ENCODE measurements at regions of chr2 and their contacts with region 1.

Region 1: DNA sequence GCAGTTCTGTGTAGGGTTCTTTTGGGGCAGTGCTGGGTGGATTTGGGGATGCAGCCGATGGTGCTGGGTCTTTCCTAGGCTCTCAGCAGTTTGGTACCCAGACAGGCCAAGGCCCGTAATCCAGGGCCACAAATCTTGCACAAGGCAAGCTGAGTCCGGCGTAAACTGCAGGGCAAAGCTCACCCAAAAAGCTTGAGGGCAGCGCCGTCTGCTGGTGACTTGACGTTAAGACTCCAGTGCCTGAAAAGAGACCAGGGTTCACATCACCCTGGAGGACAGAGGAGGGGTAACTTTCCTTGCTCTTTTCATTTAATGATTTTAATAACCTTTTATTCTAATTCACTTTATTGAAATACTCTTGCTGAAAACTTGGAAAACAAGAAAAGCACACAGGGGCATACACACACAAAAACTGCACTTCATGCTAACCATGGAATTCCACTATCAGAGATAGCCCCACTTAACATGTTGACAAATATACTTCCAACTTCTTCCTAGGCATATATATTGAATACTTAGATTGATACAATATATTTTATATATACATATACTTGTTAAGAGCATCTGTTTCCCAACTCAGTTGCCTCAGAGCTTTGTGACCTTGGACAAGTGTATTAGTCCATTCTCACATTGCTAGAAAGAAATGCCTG is 38.9 kb downstream of the CNGA3 start:
- DNase-seq: peak; percentile 83
- H3K4me3 Mint-ChIP-seq: no peak overlapping the region
- H3K27ac Mint-ChIP-seq: no peak overlapping the region
- H3K4me1 Mint-ChIP-seq: peaks cover 3% of the 10 kb centered on the region
- H3K27me3 Mint-ChIP-seq: peaks cover 7% of the 10 kb centered on the region

Region 2: DNA sequence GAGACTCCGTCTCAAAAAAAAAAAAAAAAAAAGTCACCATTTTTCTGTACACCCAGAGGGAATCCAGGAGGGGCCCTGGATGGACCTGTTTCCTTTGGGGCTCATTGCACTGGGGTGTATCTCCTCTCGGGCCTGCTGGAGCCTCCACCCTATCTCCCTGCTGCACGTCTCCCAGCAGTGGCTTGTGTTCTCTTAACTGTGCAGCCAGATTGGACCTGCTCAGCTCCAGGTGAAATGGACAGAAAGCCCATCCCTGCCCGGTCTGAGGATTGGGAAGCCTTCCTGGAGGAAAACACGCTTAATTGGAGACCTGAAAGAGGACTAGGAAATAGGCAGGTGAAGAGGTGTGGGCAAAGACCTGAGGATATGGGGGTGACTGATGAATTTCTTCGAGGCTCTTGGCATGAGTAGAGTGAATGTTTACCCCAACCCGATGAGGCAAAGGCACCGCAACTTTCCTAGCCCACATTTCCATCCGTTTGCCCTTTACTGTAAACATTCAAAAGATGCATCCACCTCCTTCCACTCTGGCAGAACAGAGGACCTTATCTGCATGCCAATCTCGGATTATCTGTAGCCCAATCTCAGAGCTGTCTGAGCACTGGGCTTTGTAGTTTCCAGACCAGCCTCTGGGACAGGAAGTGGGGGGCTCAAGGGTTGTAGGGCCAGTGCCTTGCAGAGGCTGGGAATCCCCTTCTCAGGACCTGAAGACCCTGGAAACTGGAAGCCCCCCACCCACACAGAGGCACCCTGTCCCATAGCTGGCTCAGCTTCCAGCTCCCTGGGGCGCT is 674.4 kb before region 1 on chr2:
- CTCF ChIA-PET with region 1: interaction called, 10 read pairs
- POLR2A ChIA-PET with region 1: no interaction called
- intact Hi-C with region 1: no loop called
- DNase-seq: peak; percentile 43
- H3K4me3 Mint-ChIP-seq: no peak overlapping the region
- H3K27ac Mint-ChIP-seq: peak overlapping the region; percentile 58
- H3K4me1 Mint-ChIP-seq: peaks cover 42% of the 10 kb centered on the region
- H3K27me3 Mint-ChIP-seq: no peaks in the 10 kb centered on the region

Region 3: DNA sequence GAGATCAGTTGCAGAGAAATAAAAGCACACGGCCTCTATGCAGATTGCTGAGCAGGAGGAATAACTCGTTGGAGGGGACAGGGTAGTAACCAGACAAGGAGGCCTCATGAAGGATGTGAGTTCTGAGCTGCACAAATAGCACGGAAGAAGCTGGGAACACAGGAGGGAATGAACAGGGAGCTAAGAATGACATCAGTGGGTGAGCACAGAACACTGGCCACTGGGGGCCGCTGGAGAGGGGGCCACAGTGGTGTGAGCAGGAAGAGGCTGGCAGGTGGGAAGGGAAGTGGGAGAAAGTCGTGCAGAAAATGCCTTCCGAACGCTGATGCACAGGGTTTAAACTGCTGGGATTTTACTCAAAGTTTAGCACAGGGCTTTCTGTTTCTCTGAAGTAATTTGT is 610.8 kb before region 1 on chr2:
- CTCF ChIA-PET with region 1: interaction called, 11 read pairs
- POLR2A ChIA-PET with region 1: no interaction called
- intact Hi-C with region 1: no loop called
- DNase-seq: no peak
- H3K4me3 Mint-ChIP-seq: no peak overlapping the region
- H3K27ac Mint-ChIP-seq: no peak overlapping the region
- H3K4me1 Mint-ChIP-seq: no peaks in the 10 kb centered on the region
- H3K27me3 Mint-ChIP-seq: no peaks in the 10 kb centered on the region

Region 4: GRCh38 chr2:97806738-97807618 is 578.2 kb before region 1 on chr2:
- CTCF ChIA-PET with region 1: interaction called, 36 read pairs
- POLR2A ChIA-PET with region 1: no interaction called
- intact Hi-C with region 1: loop called (anchors 1 kb)
- DNase-seq: peak; percentile 86
- H3K4me3 Mint-ChIP-seq: no peak overlapping the region
- H3K27ac Mint-ChIP-seq: no peak overlapping the region
- H3K4me1 Mint-ChIP-seq: no peaks in the 10 kb centered on the region
- H3K27me3 Mint-ChIP-seq: no peaks in the 10 kb centered on the region

Region 5: DNA sequence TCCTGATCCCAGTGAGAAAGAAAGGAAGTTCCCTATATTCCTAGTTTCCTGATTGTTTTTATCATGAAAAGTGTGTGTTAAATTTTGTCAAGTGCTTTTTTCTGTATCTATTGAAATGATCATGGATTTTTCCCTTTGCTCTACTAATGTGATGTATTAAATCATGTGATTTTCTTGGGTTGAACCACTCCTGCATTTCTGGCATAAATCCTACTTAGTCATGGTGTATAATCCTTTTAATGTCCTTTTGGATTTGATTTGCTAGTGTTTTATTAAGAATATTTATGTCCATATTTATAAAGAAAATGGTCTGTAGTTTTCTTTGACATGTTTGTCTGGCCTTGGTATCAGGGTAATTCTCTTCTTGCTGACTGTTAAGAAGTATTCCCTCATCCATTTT is 126.3 kb before region 1 on chr2:
- CTCF ChIA-PET with region 1: no interaction called
- POLR2A ChIA-PET with region 1: no interaction called
- intact Hi-C with region 1: no loop called
- DNase-seq: no peak
- H3K4me3 Mint-ChIP-seq: no peak overlapping the region
- H3K27ac Mint-ChIP-seq: no peak overlapping the region
- H3K4me1 Mint-ChIP-seq: no peaks in the 10 kb centered on the region
- H3K27me3 Mint-ChIP-seq: peaks cover 13% of the 10 kb centered on the region

Region 6: DNA sequence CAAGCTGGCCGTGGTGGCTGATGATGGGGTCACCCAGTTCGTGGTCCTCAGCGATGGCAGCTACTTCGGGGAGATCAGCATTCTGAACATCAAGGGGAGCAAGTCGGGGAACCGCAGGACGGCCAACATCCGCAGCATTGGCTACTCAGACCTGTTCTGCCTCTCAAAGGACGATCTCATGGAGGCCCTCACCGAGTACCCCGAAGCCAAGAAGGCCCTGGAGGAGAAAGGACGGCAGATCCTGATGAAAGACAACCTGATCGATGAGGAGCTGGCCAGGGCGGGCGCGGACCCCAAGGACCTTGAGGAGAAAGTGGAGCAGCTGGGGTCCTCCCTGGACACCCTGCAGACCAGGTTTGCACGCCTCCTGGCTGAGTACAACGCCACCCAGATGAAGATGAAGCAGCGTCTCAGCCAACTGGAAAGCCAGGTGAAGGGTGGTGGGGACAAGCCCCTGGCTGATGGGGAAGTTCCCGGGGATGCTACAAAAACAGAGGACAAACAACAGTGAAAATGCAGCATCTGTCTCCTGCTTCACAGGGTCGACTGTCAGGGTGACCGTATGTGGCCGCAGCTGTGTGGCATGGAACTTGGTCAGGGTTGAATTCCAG is 11.7 kb after region 1 on chr2:
- CTCF ChIA-PET with region 1: interaction called, 10 read pairs
- POLR2A ChIA-PET with region 1: no interaction called
- intact Hi-C with region 1: no loop called
- DNase-seq: no peak
- H3K4me3 Mint-ChIP-seq: no peak overlapping the region
- H3K27ac Mint-ChIP-seq: no peak overlapping the region
- H3K4me1 Mint-ChIP-seq: no peaks in the 10 kb centered on the region
- H3K27me3 Mint-ChIP-seq: peaks cover 13% of the 10 kb centered on the region

Measured in activated CD4-positive, alpha-beta memory T cell treated with anti-CD3 and anti-CD28 coated beads for 36 hours (primary cell).